Head of caudate nucleus (tissue), 42 donors: ENCODE measurements at regions of chr1 and their contacts with region 1.

Region 1: DNA sequence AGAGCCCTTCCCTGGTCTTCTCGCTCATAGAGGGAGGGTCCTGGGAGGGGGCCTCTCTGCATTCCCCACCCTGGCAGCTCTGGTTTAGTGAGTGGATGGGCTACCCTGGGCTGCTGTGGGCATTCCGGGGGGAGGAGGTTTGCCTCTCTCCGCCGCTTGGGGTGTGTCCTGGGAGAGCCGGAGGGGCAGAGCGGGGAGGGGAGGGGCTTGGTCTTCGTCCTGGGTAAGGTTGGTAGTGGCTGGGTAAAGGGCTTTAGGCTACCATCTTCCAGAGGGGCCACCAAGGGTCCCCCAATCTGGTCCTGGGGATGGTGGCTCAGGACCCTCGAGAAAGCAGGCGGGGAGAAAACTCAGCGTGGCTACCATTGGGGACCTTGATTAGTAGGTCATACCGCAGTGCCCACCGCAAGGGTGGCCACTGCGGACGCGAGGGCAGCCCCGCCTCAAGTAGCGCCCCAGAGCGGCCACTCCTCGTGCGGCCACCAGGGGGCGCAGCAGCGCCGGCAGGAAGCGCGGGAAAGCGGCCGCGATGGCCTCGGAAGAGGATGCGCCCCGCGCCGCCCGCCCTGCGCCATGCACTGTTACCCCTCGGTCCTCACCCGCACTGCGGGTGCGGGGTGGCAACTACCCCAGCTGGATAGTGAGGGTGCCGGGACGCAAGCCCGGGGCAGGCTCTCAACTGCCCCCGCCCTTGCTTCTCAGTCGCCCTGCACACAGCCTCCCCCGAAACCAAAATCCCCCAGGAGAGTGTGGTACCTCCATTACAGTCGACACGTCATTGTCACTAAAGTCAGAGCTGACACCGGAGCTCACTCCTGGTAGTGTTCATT is 44.1 kb upstream of the SLC25A33 start:
- DNase-seq: peak in 40 of 42 donors; percentile 15 to 82 (median 55)

Region 2: GRCh38 chr1:9576903-9577302 is 81.8 kb after region 1 on chr1:
- intact Hi-C with region 1: loop called (anchors 5 kb)
- DNase-seq: peak in 2 of 42 donors; percentile 24 to 26